Activated CD4-positive, alpha-beta memory T cell treated with anti-CD3 and anti-CD28 coated beads for 36 hours (primary cell): ENCODE measurements at regions of chr19 and their contacts with region 1.

Region 1: DNA sequence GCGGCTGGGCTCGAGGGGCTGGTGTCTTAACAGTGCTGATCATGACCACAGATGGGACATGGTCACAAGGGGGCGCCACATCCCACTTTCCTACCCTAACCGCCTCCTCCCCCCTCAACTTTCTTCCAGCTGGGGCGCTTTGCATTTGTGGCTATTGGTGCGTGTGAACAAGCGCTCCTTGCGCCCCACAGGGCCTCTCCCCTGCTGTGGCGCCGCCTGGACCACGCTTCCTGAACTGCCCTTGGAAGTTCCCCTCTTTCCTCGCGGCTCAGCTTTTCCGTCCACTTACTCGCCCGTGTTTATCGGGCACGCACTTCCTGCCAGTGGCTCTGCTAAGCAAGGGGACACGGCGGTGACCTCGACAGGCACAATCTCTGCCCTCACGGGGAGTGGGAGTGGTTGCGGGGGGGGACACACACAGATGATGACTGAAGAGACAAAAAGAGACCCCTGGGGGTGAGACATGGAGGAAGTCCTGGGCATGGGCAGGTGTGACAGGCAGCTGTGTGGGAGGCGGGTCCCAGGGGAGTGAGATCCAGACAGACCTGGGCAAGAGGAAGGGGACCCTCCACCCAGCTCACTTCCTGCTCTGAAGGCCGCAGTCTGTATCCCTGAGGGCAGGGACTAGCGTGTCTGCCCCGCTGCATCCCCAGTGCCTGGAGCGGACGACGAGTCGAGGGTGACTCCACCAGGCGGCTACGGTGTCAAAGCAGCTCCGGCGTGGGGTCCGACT is 40.3 kb downstream of the ZNF787 start:
- DNase-seq: peak; percentile 84
- H3K4me3 Mint-ChIP-seq: peak overlapping the region; percentile 51
- H3K27ac Mint-ChIP-seq: no peak overlapping the region
- H3K4me1 Mint-ChIP-seq: peaks cover 12% of the 10 kb centered on the region
- H3K27me3 Mint-ChIP-seq: peaks cover 6% of the 10 kb centered on the region

Region 2: GRCh38 chr19:56066152-56067023 is 14.4 kb before region 1 on chr19:
- CTCF ChIA-PET with region 1: interaction called, 24 read pairs
- POLR2A ChIA-PET with region 1: interaction called, 3 read pairs
- intact Hi-C with region 1: no loop called
- DNase-seq: peak; percentile 70
- H3K4me3 Mint-ChIP-seq: peak overlapping the region; percentile 48
- H3K27ac Mint-ChIP-seq: no peak overlapping the region
- H3K4me1 Mint-ChIP-seq: peaks cover 10% of the 10 kb centered on the region
- H3K27me3 Mint-ChIP-seq: peaks cover 28% of the 10 kb centered on the region

Region 3: GRCh38 chr19:56170261-56170660 is 89.4 kb after region 1 on chr19:
- CTCF ChIA-PET with region 1: interaction called, 24 read pairs
- POLR2A ChIA-PET with region 1: no interaction called
- intact Hi-C with region 1: loop called (anchors 1 kb)
- DNase-seq: no peak
- H3K4me3 Mint-ChIP-seq: no peak overlapping the region
- H3K27ac Mint-ChIP-seq: no peak overlapping the region
- H3K4me1 Mint-ChIP-seq: no peaks in the 10 kb centered on the region
- H3K27me3 Mint-ChIP-seq: peaks cover 7% of the 10 kb centered on the region

Region 4: GRCh38 chr19:56252699-56253422 is 172.0 kb after region 1 on chr19:
- CTCF ChIA-PET with region 1: interaction called, 25 read pairs
- POLR2A ChIA-PET with region 1: no interaction called
- intact Hi-C with region 1: loop called (anchors 5 kb)
- DNase-seq: peak; percentile 83
- H3K4me3 Mint-ChIP-seq: no peak overlapping the region
- H3K27ac Mint-ChIP-seq: no peak overlapping the region
- H3K4me1 Mint-ChIP-seq: peaks cover 5% of the 10 kb centered on the region
- H3K27me3 Mint-ChIP-seq: no peaks in the 10 kb centered on the region

Region 5: GRCh38 chr19:56333505-56333904 is 252.7 kb after region 1 on chr19:
- CTCF ChIA-PET with region 1: interaction called, 38 read pairs
- POLR2A ChIA-PET with region 1: no interaction called
- intact Hi-C with region 1: loop called (anchors 5 kb)
- DNase-seq: peak; percentile 34
- H3K4me3 Mint-ChIP-seq: no peak overlapping the region
- H3K27ac Mint-ChIP-seq: no peak overlapping the region
- H3K4me1 Mint-ChIP-seq: no peaks in the 10 kb centered on the region
- H3K27me3 Mint-ChIP-seq: peaks cover 5% of the 10 kb centered on the region

Region 6: DNA sequence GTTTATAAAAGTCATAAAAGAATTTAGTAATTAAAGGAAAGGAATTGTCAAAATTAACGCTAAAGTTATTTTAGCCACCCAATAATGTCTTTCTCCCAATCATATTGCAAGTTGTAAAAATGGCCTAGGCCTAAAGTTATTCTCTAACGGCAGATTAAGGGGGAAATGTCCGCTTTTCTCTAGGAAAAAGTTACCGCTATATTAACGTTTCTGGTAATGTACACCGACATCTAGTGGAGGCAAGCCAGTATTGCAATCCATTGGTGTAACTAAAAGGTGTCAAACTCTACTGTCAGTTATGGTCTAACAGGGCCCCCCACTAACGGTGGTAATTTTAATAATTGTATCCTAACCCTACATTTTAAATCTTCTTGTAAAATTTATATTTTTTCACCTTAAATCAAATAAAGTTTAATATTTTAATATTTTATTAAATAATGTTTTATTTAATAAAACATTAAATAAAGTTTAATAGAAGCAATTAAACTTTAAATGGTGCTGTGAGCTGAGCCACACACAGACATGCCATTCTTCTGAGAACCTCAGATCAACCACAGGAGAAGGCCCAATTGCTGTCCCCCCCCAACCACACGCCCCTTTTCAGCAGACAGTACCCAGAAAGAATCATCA is 269.7 kb after region 1 on chr19:
- CTCF ChIA-PET with region 1: interaction called, 16 read pairs
- POLR2A ChIA-PET with region 1: no interaction called
- intact Hi-C with region 1: loop called (anchors 5 kb)
- DNase-seq: peak; percentile 46
- H3K4me3 Mint-ChIP-seq: no peak overlapping the region
- H3K27ac Mint-ChIP-seq: no peak overlapping the region
- H3K4me1 Mint-ChIP-seq: no peaks in the 10 kb centered on the region
- H3K27me3 Mint-ChIP-seq: no peaks in the 10 kb centered on the region